ENCODE measurements at regions of chr9 and their contacts with region 1.

Region 1: GRCh38 chr9:21559424-21560280 is 77.5 kb upstream of the IFNE start:
- DNase-seq: peak; percentile 17
- ATAC-seq: peak; percentile 31
- H3K4me3 Mint-ChIP-seq: peak overlapping the region; percentile 68
- H3K27ac Mint-ChIP-seq: no peak overlapping the region
- H3K4me1 Mint-ChIP-seq: peaks cover 13% of the 10 kb centered on the region
- H3K27me3 Mint-ChIP-seq: peaks cover 28% of the 10 kb centered on the region
- CTCF ChIP-seq: no peak

Region 2: GRCh38 chr9:21513431-21513830 is 46.2 kb before region 1 on chr9:
- CTCF ChIA-PET with region 1: no interaction called
- POLR2A ChIA-PET with region 1: no interaction called
- intact Hi-C with region 1: loop called (anchors 5 kb)
- DNase-seq: no peak
- ATAC-seq: no peak
- H3K4me3 Mint-ChIP-seq: no peak overlapping the region
- H3K27ac Mint-ChIP-seq: no peak overlapping the region
- H3K4me1 Mint-ChIP-seq: no peaks in the 10 kb centered on the region
- H3K27me3 Mint-ChIP-seq: no peaks in the 10 kb centered on the region
- CTCF ChIP-seq: no peak

Measured in activated B cell treated with CpG ODN at 0.5 μM for 24 hours (primary cell).